Activated CD8-positive, alpha-beta T cell treated with anti-CD3 and anti-CD28 coated beads, Interleukin-2, amount 10 ng/mL, durations not matched to agents 7 days and 5 days (primary cell): ENCODE measurements at regions of chr10 and their contacts with region 1.

Region 1: DNA sequence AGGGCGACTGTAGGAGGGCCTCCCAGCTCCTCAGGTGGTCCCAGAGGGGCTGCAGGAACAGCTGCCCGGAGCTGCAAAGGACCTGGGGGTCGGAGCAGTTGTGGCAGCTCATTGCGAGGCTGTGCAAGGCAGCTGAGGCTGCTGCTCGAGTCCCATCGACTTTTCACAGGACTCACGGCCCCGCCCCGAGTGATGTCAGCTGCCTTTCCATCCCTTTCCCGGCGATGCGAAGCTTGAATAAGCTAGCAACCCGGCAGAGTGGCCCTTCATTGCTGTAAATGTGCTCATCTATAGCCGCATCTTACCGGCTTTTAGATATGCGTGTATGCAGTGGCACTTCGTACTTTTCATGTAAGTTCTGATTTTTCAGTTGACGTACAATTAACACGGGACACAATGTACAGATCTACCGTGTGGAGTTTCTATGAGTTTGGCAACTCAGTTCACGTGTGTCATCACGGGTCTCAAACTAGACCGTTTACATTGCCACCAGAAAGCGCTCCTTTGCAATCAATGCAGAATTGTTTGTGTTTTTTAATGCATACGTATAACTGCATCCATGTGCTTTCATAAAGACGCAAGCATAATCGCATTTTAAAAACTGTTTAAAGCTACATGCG is at the start of gene CH25H:
- DNase-seq: peak; percentile 53
- ATAC-seq: peak; percentile 76
- H3K4me3 Mint-ChIP-seq: peak within 1 kb of the TSS; percentile 65
- H3K27ac Mint-ChIP-seq: peak within 1 kb of the TSS; percentile 32
- H3K4me1 Mint-ChIP-seq: peaks cover 23% of the 10 kb centered on the region
- H3K27me3 Mint-ChIP-seq: peaks cover 38% of the 10 kb centered on the region
- total RNA-seq, gene CH25H: not detected

Region 2: DNA sequence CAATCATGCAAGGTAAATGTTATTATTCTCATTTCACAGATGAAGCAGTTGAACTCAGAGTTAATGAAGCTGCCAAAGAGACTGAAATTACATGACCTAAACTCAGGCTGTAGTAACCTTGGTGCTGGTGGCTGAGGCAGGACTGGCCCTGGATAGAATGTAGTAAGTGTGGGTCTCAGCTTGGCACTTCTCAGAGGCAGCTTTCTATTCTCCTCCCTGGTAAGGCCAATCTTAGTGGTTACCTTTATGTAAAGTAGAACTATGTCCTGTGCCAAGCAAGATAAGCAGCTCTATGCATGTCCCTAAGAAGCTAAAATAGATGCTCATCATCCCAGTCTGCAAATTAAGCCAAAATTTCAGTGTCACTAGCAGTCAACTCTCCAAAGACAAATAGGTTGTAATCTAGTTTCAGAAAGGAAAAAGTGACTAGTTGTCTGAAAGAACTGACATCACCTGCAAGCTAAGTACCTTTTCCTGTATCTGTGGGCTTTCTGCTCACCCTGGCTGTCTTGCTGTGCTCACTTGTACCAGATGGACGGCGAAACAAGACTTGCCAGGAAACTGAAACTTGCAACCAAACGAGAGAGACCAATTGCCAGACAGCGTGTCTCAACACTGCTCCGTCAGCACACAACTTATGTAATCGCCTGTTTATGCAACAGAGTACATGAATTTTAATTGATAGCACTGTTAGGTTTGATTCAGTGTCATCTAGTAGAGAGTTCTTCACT is 43.9 kb before region 1 on chr10:
- CTCF ChIA-PET with region 1: interaction called, 15 read pairs
- POLR2A ChIA-PET with region 1: no interaction called
- DNase-seq: peak; percentile 84
- ATAC-seq: peak; percentile 96
- H3K4me3 Mint-ChIP-seq: peak overlapping the region; percentile 67
- H3K27ac Mint-ChIP-seq: peak overlapping the region; percentile 84
- H3K4me1 Mint-ChIP-seq: peaks cover 31% of the 10 kb centered on the region
- H3K27me3 Mint-ChIP-seq: peaks cover 6% of the 10 kb centered on the region